ENCODE measurements at regions of chr11 and their contacts with region 1.

Region 1: DNA sequence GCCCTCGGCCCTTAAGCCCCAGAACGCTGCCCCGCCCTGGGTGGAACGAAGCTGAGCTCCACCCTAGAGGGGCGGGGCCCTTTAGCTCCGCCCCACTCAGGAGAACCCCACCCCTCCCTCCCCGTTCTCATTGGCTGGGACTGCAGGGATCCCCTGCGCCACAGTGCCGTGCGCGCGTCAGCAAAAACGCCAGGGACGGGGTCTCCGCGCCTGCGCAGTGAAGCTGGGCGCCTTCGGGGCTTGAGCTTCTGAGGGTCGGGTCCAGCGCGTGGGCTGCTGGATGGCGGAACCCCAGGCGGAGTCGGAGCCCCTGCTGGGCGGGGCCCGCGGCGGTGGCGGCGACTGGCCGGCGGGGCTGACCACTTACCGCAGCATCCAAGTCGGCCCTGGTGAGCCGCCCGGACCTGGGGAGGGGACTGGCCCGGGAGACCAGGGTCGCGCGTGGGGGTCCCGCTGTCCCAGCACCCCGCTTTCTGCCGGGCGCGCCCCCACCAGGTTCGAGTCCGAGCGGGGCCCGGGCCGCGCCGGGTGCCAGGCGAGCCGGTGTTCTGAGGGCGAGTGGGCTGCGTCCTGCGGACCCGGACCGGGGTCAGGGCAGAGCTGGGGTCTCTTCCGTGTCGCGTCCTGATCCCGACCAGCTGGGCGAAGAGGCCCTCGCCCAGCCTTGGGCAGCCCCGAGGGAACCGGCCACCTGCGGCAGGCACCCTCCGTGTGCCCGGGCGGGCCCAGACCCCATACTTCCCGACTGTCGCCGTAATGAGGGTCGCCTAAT is at the start of gene TPCN2:
- DNase-seq: peak; percentile 90
- H3K4me3 Mint-ChIP-seq: peak within 1 kb of the TSS; percentile 72
- H3K27ac Mint-ChIP-seq: peak within 1 kb of the TSS; percentile 66
- H3K4me1 Mint-ChIP-seq: peaks cover 16% of the 10 kb centered on the region
- H3K27me3 Mint-ChIP-seq: no peaks in the 10 kb centered on the region
- total RNA-seq, gene TPCN2: 7.0 to 8.0 TPM

Region 2: DNA sequence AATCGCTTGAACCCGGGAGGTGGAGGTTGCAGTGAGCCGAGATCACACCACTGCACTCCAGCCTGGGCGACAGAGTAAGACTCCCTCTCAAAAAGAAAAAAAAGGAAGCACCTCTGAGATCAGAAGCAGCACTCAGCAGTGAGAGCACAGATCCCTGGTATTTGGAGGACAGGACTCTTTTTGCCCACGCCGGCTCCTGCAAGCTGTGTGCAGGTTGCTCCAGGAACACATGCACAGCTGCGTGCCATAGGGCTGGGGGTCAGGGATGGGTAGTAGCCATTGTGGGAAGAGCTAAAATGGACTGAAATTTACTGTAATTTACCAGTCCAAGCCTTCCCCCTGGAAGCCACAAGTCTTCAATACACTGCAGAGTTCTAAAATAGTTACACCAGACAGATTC is 813.3 kb before region 1 on chr11:
- CTCF ChIA-PET with region 1: no interaction called
- intact Hi-C with region 1: no loop called
- DNase-seq: no peak
- H3K4me3 Mint-ChIP-seq: no peak overlapping the region
- H3K27ac Mint-ChIP-seq: no peak overlapping the region
- H3K4me1 Mint-ChIP-seq: no peaks in the 10 kb centered on the region
- H3K27me3 Mint-ChIP-seq: peaks cover 4% of the 10 kb centered on the region

Region 3: DNA sequence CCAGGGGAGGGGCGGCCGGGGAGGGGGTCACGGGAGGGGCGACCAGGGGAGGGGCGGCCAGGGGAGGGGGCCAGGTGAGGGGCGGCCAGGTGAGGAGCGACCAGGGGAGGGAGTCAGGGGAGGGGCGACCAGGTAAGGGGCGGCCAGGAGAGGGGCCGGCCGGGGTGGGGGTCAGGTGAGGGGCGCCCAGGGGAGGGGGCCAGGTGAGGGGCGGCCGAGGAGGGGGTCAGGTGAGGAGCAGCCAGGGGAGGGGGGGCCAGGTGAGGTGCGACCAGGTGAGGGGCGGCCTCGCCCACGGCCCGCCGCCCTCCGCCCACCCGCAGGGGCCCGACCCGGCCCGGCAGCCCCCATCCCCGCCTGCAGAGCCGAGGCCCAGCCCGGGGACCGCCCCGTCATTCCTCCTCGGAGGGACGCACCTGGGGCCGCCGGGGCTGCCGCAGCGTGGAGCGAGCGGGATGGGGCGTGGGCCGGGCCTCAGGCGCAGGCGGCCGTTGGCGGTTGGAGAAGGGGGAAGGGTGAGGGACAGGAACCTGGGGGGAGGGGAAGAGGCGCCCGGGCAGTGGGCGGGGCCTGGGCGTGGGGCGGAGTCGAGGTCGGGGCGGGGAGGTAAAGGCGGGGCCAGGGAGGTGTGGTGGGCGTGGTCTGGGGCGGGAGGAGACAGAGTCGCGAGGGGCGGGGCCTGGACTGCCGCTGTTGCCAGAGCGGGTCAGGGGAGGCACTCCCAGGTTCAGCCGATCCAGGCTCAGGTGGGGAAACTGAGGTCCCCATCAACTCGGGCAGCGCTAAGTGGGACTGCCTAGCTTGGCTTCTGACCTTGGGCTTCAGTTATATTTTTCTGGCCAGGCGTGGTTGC is 297.7 kb before region 1 on chr11 and contains the start of gene TESMIN:
- CTCF ChIA-PET with region 1: no interaction called
- intact Hi-C with region 1: loop called (anchors 1 kb)
- DNase-seq: peak; percentile 97
- H3K4me3 Mint-ChIP-seq: peak within 1 kb of the TSS; percentile 65
- H3K27ac Mint-ChIP-seq: no peak within 1 kb of the TSS
- H3K4me1 Mint-ChIP-seq: peaks cover 9% of the 10 kb centered on the region
- H3K27me3 Mint-ChIP-seq: no peaks in the 10 kb centered on the region
- total RNA-seq, gene TESMIN: 6.2 to 7.3 TPM

Region 4: DNA sequence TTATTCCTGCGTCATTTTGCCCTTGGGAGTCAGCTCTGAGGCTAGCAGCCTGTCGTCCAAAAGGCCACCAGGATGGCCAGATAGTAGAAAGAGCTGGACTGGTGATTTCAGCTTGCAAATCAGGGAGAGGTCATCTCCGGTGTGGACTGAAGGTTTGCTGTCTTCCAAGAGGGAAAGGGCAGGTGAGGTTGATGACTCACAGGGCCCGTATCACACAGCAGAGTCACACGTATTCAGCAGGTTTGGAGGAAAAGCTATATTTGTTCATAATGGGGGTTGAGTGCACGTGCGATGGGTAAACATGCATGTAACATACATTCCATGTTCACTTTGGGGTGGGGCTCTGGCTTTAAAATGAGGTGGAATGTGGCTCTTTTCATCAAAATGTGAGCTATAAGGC is 170.9 kb before region 1 on chr11:
- CTCF ChIA-PET with region 1: no interaction called
- intact Hi-C with region 1: no loop called
- DNase-seq: no peak
- H3K4me3 Mint-ChIP-seq: no peak overlapping the region
- H3K27ac Mint-ChIP-seq: no peak overlapping the region
- H3K4me1 Mint-ChIP-seq: no peaks in the 10 kb centered on the region
- H3K27me3 Mint-ChIP-seq: no peaks in the 10 kb centered on the region

Region 5: DNA sequence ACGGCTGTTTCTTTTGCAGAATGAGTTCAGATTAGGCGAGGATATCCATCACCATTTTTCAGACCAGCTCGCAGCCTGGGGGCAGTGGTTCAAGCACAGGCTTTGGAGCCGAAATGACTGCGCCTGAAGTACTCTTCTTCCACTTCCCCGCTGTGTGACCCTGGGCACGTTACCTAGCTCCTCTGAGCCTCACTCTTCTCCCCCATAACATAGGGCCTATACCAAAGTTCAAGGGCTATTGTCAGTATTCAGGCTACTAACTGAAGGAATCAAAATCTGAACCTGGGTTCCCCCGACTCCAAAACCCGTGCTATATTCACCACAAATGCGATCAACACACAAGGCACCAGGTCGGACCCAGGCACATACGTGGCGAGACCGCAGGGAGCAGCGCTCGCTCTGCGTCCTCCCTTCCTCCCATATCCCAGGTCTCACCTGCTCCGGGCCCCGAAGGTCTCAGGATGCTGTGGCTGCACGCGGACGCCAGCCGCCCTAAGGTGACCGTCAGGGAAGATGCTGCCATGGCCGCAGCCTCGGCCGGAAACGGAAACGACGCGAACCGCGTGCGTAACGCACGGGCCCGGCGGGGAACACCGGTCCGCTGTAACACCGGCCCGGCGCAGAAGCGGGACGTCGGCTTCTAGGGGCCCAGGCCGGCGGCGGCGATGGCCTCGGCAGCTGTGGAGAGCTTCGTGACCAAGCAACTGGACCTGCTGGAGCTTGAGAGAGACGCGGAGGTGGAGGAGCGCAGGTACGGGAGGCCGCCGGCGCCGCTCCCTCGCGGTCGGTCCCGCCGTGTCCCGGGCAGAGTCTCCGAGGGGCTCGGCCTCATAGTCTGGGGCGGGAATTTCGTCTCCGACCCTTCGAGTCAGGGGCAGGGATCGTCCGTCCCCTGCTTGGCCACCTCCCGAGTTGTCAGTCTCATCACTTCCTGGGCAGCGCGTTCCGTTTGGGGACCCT is 145.3 kb before region 1 on chr11 and contains the starts of genes IGHMBP2 and MRPL21:
- CTCF ChIA-PET with region 1: no interaction called
- intact Hi-C with region 1: loop called (anchors 1 kb)
- DNase-seq: peak; percentile 88
- H3K4me3 Mint-ChIP-seq: peak within 1 kb of the TSS; percentile 88
- H3K27ac Mint-ChIP-seq: peak within 1 kb of the TSS; percentile 85
- H3K4me1 Mint-ChIP-seq: peaks cover 41% of the 10 kb centered on the region
- H3K27me3 Mint-ChIP-seq: no peaks in the 10 kb centered on the region
- total RNA-seq, gene IGHMBP2: 29.4 to 31.1 TPM
- total RNA-seq, gene MRPL21: 90.8 to 92.1 TPM

Region 6: GRCh38 chr11:69200331-69201065 is 151.6 kb after region 1 on chr11:
- CTCF ChIA-PET with region 1: no interaction called
- intact Hi-C with region 1: no loop called
- DNase-seq: no peak
- H3K4me3 Mint-ChIP-seq: no peak overlapping the region
- H3K27ac Mint-ChIP-seq: no peak overlapping the region
- H3K4me1 Mint-ChIP-seq: peaks cover 5% of the 10 kb centered on the region
- H3K27me3 Mint-ChIP-seq: no peaks in the 10 kb centered on the region

Region 7: GRCh38 chr11:69417146-69418085 is 368.5 kb after region 1 on chr11:
- CTCF ChIA-PET with region 1: no interaction called
- intact Hi-C with region 1: no loop called
- DNase-seq: no peak
- H3K4me3 Mint-ChIP-seq: no peak overlapping the region
- H3K27ac Mint-ChIP-seq: no peak overlapping the region
- H3K4me1 Mint-ChIP-seq: peaks cover 2% of the 10 kb centered on the region
- H3K27me3 Mint-ChIP-seq: no peaks in the 10 kb centered on the region

Measured in activated naive CD4-positive, alpha-beta T cell treated with anti-CD3 and anti-CD28 coated beads for 36 hours (primary cell).